ENCODE measurements at regions of chr6 and their contacts with region 1.

Region 1: DNA sequence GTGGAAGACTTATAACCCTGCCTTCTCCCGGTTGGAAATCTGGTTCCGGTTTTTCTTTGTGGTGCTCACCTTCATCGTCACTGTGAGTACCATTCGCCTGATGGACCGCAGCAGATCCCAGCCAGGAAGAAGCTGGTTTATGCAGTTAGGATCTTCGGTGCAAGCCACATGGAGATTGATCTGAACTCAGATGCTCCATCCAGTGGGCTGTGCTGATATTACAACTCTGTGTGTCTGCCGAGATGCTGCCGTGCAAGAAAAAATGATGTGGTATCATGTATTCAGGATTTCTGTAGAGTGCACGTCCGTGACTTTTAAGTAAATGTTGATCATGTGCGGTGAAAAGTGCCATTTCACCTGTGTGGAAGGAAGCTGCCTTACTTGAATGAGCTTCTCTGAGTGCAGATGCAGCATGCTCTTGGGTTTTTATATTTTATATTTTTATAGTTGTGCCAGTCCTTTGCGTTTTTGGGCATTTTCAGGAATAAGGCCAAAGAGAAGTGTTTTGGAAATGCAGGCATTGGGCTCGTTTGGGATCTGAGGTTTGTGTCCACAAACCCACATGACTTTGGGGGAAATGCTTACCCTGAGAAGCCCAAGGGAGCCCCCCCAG is 39.2 kb downstream of the DYNLT1 start:
- DNase-seq: no peak
- ATAC-seq: peak; percentile 71
- H3K4me3 Mint-ChIP-seq: no peak overlapping the region
- H3K27ac Mint-ChIP-seq: no peak overlapping the region
- H3K4me1 Mint-ChIP-seq: no peaks in the 10 kb centered on the region
- H3K27me3 Mint-ChIP-seq: no peaks in the 10 kb centered on the region
- CTCF ChIP-seq: no peak

Region 2: GRCh38 chr6:157449610-157450009 is 1155.8 kb before region 1 on chr6:
- CTCF ChIA-PET with region 1: no interaction called
- POLR2A ChIA-PET with region 1: no interaction called
- intact Hi-C with region 1: no loop called
- DNase-seq: no peak
- ATAC-seq: no peak
- H3K4me3 Mint-ChIP-seq: no peak overlapping the region
- H3K27ac Mint-ChIP-seq: no peak overlapping the region
- H3K4me1 Mint-ChIP-seq: no peaks in the 10 kb centered on the region
- H3K27me3 Mint-ChIP-seq: no peaks in the 10 kb centered on the region
- CTCF ChIP-seq: no peak

Region 3: GRCh38 chr6:158408552-158409130 is 196.7 kb before region 1 on chr6:
- CTCF ChIA-PET with region 1: no interaction called
- POLR2A ChIA-PET with region 1: no interaction called
- intact Hi-C with region 1: no loop called
- DNase-seq: no peak
- ATAC-seq: no peak
- H3K4me3 Mint-ChIP-seq: no peak overlapping the region
- H3K27ac Mint-ChIP-seq: no peak overlapping the region
- H3K4me1 Mint-ChIP-seq: peaks cover 6% of the 10 kb centered on the region
- H3K27me3 Mint-ChIP-seq: no peaks in the 10 kb centered on the region
- CTCF ChIP-seq: no peak

Region 4: GRCh38 chr6:158999666-159000403 is 394.5 kb after region 1 on chr6 and contains the start of gene RSPH3:
- CTCF ChIA-PET with region 1: no interaction called
- POLR2A ChIA-PET with region 1: interaction called, 12 read pairs
- intact Hi-C with region 1: no loop called
- DNase-seq: peak; percentile 87
- ATAC-seq: peak; percentile 90
- H3K4me3 Mint-ChIP-seq: peak within 1 kb of the TSS; percentile 94
- H3K27ac Mint-ChIP-seq: peak within 1 kb of the TSS; percentile 85
- H3K4me1 Mint-ChIP-seq: peaks cover 27% of the 10 kb centered on the region
- H3K27me3 Mint-ChIP-seq: no peaks in the 10 kb centered on the region
- CTCF ChIP-seq: no peak
- total RNA-seq, gene RSPH3: 1.9 and 2.4 TPM in 2 replicates